ENCODE measurements at regions of chr20 and their contacts with region 1.

Region 1: DNA sequence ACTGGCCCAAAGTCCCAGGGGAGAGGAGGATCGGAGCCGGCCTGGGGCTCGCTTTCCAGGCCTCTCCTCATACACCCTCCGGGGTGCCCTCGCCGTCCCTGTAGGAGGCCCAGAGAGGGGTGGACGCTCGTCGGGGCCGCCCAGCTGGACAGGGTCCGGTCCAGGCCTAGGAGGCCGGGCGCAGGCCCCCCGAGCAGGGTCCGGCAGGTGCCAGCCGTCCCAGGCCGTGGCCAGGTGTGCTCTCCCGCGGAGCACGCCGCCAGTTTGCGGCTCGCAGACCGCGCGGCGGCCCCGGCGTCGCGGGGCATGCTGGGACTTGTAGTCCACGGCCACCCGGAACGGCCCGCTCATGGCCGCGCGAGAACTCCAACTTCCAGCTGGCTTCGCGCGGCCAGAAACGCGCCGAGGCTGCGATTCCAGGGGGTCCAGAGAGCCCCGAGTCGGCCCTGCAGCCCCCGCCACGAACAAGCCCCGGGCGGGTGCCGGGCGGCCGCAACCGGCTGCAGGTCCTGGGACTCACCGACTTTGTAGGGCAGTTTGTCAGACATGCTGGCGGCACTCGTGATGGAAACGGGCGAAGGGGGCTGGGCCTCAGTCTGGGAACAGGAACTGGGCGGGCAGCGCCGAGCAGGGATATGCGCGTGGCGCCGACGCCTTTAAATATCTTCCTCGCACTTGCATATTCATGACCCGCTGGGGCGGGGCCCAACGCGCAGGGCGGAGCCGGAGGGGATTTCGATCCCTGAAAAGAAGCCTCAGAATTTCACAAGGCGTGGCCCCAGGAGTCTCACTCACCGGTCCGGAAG is at the start of gene AHCY:
- DNase-seq: peak; percentile 93
- H3K4me3 Mint-ChIP-seq: peak within 1 kb of the TSS; percentile 83
- H3K27ac Mint-ChIP-seq: peak within 1 kb of the TSS; percentile 92
- H3K4me1 Mint-ChIP-seq: peaks cover 19% of the 10 kb centered on the region
- H3K27me3 Mint-ChIP-seq: no peaks in the 10 kb centered on the region
- total RNA-seq, gene AHCY: 130 and 132 TPM in 2 replicates

Region 2: DNA sequence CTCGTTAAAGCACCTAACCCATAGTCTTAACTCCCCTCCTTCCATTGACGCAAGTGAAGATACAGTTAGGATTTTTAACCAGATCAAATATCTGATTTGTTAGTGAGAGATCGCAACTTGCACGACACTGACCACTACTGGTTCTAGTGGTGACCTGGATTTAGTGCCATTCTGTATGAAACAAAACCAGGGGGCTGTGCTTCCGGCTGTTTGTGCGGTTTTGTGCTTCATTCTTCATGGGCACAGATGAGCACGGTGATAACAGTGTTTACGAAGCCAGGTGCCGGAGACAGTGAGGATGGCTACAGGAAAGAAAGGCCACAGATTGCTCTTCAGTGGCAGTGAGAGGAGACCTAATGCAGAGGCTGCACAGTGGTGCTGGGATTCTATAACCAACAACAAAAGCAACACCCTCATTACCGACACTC is 1793.3 kb before region 1 on chr20:
- intact Hi-C with region 1: loop called (anchors 5 kb)
- DNase-seq: no peak
- H3K4me3 Mint-ChIP-seq: peak overlapping the region; percentile 34
- H3K27ac Mint-ChIP-seq: peak overlapping the region; percentile 68
- H3K4me1 Mint-ChIP-seq: peaks cover 42% of the 10 kb centered on the region
- H3K27me3 Mint-ChIP-seq: no peaks in the 10 kb centered on the region

Region 3: DNA sequence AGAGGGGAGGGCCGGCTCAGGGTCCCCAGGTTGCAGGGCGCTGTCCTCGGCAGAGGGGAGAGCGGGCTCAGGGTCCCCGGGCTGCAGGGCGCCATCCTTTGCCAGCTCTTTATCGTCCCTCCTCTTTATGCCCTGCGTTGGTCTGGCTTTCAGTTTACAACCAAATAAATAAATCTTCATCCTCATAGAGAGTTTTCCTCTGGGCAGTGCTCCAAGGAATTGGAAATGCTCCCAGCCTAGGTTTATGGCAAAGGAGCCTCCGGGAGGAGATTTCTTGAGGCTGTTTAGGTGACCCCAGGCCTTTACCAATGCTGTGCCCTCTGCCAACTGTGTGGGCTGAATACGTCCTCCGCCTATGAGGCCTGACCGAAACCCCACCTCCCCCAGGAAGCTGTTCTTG is 431.6 kb before region 1 on chr20:
- intact Hi-C with region 1: no loop called
- DNase-seq: no peak
- H3K4me3 Mint-ChIP-seq: no peak overlapping the region
- H3K27ac Mint-ChIP-seq: no peak overlapping the region
- H3K4me1 Mint-ChIP-seq: no peaks in the 10 kb centered on the region
- H3K27me3 Mint-ChIP-seq: no peaks in the 10 kb centered on the region

Region 4: GRCh38 chr20:34111702-34112599 is 191.0 kb before region 1 on chr20 and contains the start of gene EIF2S2:
- intact Hi-C with region 1: loop called (anchors 1 kb)
- DNase-seq: peak; percentile 96
- H3K4me3 Mint-ChIP-seq: peak within 1 kb of the TSS; percentile 88
- H3K27ac Mint-ChIP-seq: peak within 1 kb of the TSS; percentile 98
- H3K4me1 Mint-ChIP-seq: peaks cover 46% of the 10 kb centered on the region
- H3K27me3 Mint-ChIP-seq: peaks cover 1% of the 10 kb centered on the region
- total RNA-seq, gene EIF2S2: 99.8 and 105 TPM in 2 replicates

Region 5: DNA sequence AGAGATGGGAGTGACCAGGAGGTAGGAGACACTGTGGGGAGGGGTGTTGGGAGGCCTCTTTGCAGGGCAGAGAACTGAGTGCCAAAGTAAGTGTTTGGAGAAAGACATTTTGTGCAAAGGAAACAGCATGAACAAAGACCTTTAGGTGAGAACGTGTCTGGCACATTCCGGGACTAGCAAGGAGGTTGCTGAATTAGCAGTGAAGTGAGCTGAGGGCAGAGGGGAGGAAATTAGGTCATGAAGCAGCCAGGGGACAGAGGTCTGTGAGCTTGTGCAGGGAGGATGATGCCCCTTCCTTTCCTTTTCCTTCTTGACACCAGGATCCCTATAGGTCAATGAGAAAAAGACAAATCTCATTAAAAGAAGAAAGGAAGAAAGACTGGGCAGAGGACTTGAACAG is 21.6 kb after region 1 on chr20:
- intact Hi-C with region 1: no loop called
- DNase-seq: no peak
- H3K4me3 Mint-ChIP-seq: no peak overlapping the region
- H3K27ac Mint-ChIP-seq: no peak overlapping the region
- H3K4me1 Mint-ChIP-seq: no peaks in the 10 kb centered on the region
- H3K27me3 Mint-ChIP-seq: peaks cover 13% of the 10 kb centered on the region

Region 6: GRCh38 chr20:34516247-34517113 is 213.6 kb after region 1 on chr20 and contains the start of gene DYNLRB1:
- intact Hi-C with region 1: loop called (anchors 1 kb)
- DNase-seq: peak; percentile 93
- H3K4me3 Mint-ChIP-seq: peak within 1 kb of the TSS; percentile 95
- H3K27ac Mint-ChIP-seq: peak within 1 kb of the TSS; percentile 96
- H3K4me1 Mint-ChIP-seq: peaks cover 35% of the 10 kb centered on the region
- H3K27me3 Mint-ChIP-seq: no peaks in the 10 kb centered on the region
- total RNA-seq, gene DYNLRB1: 92.0 and 104 TPM in 2 replicates

Region 7: GRCh38 chr20:34621383-34622367 is 318.7 kb after region 1 on chr20:
- intact Hi-C with region 1: no loop called
- DNase-seq: no peak
- H3K4me3 Mint-ChIP-seq: no peak overlapping the region
- H3K27ac Mint-ChIP-seq: peak overlapping the region; percentile 32
- H3K4me1 Mint-ChIP-seq: peaks cover 47% of the 10 kb centered on the region
- H3K27me3 Mint-ChIP-seq: no peaks in the 10 kb centered on the region

Measured in activated T-helper 1 cell treated with anti-CD3 and anti-CD28 coated beads, Interleukin-12 subunit alpha, Interleukin-12 subunit beta, Interleukin-2, Interleukin-4 antibody, amounts not matched to agents 30 ng/mL and 10 ng/mL and 1 ng/mL, durations not matched to agents 14 hours and 24 hours and 36 hours (primary cell).